HEK293 (cell line): ENCODE measurements at regions of chr2 and their contacts with region 1.

Region 1: GRCh38 chr2:11583840-11584524 is 50.1 kb downstream of the GREB1 start:
- H3K4me3 ChIP-seq: no peak overlapping the region
- H3K27ac ChIP-seq: no peak overlapping the region
- H3K4me1 ChIP-seq: peaks cover 3% of the 10 kb centered on the region
- CTCF ChIP-seq: peak; percentile 81

Region 2: DNA sequence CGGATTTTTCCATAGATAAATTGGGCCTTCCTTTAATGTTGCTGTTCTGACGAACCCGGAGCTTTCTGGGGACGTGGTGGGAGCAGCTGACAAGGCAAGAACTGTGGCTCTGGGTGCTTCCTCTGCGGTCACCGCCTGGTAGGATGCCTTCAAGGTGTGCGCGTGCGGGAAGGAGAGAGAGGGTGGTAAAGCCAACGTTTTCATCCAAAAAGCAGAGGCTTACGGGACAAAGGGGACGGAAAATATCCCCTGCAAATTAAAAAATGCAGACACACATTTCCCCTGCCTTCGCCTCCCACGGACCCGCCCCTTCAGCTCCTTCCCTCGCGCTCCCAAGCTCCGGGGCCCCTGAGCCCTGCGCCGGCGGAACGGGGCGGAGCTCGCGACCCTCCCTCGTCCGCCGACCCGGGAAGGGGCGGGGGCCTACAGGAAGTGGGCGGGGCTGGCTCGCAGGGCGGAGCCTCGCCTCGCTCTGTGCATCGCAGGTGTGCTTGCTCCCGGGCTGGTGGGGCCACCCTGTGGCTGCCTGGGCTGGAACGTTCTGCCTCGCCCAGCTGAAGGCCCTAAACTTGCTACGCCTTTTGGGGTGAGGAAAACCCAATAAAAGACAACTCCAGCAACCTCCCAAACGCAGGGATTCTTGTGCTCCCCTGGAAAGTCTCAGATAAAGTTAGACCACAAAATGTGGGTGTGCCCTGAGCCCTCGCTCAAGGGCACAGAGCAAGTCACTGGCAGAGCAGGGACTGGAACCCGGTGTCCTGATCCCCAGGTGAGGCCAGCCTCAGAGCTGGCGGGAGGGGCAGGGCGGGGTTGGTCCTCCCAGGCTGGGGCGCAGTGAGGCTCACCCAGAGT is 454.2 kb before region 1 on chr2:
- CTCF ChIA-PET with region 1: interaction called, 98 read pairs
- POLR2A ChIA-PET with region 1: interaction called, 5 read pairs
- H3K4me3 ChIP-seq: peak overlapping the region; percentile 6; the same call in 1 of the 2 replicates
- H3K27ac ChIP-seq: no peak overlapping the region
- H3K4me1 ChIP-seq: 0 out of 2 replicates have a peak, but pooled peaks cover 3% of the 10 kb centered on the region
- CTCF ChIP-seq: peak; percentile 78

Region 3: GRCh38 chr2:11446733-11447248 is 137.2 kb before region 1 on chr2:
- CTCF ChIA-PET with region 1: interaction called, 10 read pairs
- POLR2A ChIA-PET with region 1: interaction called, 3 read pairs
- H3K4me3 ChIP-seq: no peak overlapping the region
- H3K27ac ChIP-seq: no peak overlapping the region
- H3K4me1 ChIP-seq: no peaks in the 10 kb centered on the region
- CTCF ChIP-seq: peak; percentile 57

Region 4: GRCh38 chr2:11477994-11478393 is 106.0 kb before region 1 on chr2:
- CTCF ChIA-PET with region 1: interaction called, 282 read pairs
- POLR2A ChIA-PET with region 1: no interaction called
- H3K4me3 ChIP-seq: no peak overlapping the region
- H3K27ac ChIP-seq: no peak overlapping the region
- H3K4me1 ChIP-seq: no peaks in the 10 kb centered on the region; the same call in 1 of the 2 replicates
- CTCF ChIP-seq: peak; percentile 68

Region 5: GRCh38 chr2:11547912-11548497 is 36.0 kb before region 1 on chr2:
- CTCF ChIA-PET with region 1: interaction called, 12 read pairs
- POLR2A ChIA-PET with region 1: no interaction called
- H3K4me3 ChIP-seq: no peak overlapping the region
- H3K27ac ChIP-seq: no peak overlapping the region
- H3K4me1 ChIP-seq: no peaks in the 10 kb centered on the region
- CTCF ChIP-seq: no peak

Region 6: DNA sequence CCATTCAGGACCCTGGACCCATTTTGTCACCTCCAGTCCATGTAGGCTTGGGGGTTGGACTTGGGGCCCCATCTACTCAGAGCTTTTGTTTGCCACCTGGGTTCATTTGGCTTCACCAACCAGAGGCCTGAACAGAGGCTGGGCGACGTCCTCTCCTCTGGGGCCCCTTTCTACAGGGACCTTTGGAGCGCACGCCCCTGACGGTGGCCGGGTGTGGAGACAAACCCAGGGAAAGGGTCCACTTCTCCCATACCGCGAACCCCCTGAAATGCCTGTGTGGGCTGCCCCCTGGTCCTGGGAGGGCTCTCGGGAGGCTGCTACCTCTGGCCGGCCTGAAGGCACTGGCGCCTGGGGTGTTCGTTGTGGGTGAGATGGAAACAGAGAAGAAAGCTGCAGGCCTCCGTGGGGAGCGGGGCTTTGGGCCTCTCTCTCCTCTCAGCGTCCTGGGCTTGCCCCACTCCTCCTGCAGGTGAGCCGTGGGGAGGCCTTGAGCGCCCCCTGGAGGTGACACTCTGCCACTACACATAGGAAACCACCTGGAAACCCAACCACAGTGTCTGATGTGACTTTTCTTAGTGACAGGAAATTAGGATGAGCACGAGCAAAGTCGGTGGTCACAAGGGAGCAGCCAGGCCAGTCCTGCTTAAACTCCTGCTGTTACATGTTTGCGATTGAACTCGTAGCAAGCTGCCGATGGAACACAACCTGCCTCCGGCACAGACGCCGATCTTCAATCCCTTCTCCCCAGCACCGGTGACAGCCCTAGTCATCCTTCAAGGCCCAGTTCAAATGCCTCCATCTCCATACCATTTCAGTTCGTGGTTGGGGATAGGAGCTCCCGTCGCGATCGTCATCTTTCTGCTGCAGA is 98.0 kb after region 1 on chr2:
- CTCF ChIA-PET with region 1: interaction called, 39 read pairs
- POLR2A ChIA-PET with region 1: no interaction called
- H3K4me3 ChIP-seq: no peak overlapping the region
- H3K27ac ChIP-seq: peak overlapping the region; percentile 16; the same call in 1 of the 2 replicates
- H3K4me1 ChIP-seq: no peaks in the 10 kb centered on the region
- CTCF ChIP-seq: peak; percentile 88

Region 7: GRCh38 chr2:11873356-11874154 is 289.6 kb after region 1 on chr2:
- CTCF ChIA-PET with region 1: no interaction called
- POLR2A ChIA-PET with region 1: no interaction called
- H3K4me3 ChIP-seq: no peak overlapping the region
- H3K27ac ChIP-seq: no peak overlapping the region
- H3K4me1 ChIP-seq: no peaks in the 10 kb centered on the region
- CTCF ChIP-seq: no peak